ENCODE measurements at regions of chr1 and their contacts with region 1.

Region 1: GRCh38 chr1:221487781-221488524 is 253.9 kb downstream of the DUSP10 start:
- DNase-seq: no peak
- ATAC-seq: no peak
- H3K4me3 ChIP-seq: no peak overlapping the region
- H3K27ac ChIP-seq: no peak overlapping the region
- H3K4me1 ChIP-seq: no peaks in the 10 kb centered on the region
- H3K27me3 ChIP-seq: no peaks in the 10 kb centered on the region
- CTCF ChIP-seq: no peak

Region 2: DNA sequence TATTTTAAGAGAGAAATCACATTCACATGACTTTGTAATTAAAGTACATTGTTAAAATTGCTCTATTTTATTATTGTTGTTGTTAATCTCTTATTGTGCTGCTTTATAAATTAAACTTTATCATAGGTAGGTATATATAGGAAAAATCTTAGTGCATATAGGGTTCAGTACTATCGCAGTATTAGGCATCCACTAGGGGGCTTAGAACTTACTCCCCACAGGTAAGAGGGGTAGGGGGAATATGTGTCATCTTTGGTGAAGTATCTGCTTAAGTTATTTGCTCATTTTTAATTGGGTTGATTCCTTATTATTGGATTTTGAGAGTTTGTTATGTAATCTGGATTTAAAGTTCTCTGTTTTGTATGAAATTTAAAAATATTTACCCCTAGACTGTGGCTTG is 131.3 kb before region 1 on chr1:
- intact Hi-C with region 1: no loop called
- DNase-seq: no peak
- ATAC-seq: no peak
- H3K4me3 ChIP-seq: no peak overlapping the region
- H3K27ac ChIP-seq: no peak overlapping the region
- H3K4me1 ChIP-seq: no peaks in the 10 kb centered on the region
- H3K27me3 ChIP-seq: no peaks in the 10 kb centered on the region
- CTCF ChIP-seq: no peak

Region 3: GRCh38 chr1:221620437-221621384 is 132.8 kb after region 1 on chr1:
- intact Hi-C with region 1: loop called (anchors 5 kb)
- DNase-seq: no peak
- ATAC-seq: no peak
- H3K4me3 ChIP-seq: no peak overlapping the region
- H3K27ac ChIP-seq: no peak overlapping the region
- H3K4me1 ChIP-seq: no peaks in the 10 kb centered on the region
- H3K27me3 ChIP-seq: no peaks in the 10 kb centered on the region
- CTCF ChIP-seq: no peak

Measured in upper lobe of right lung (tissue), 1 donor.